Lower leg skin (tissue), 4 donors: ENCODE measurements at regions of chr1 and their contacts with region 1.

Region 1: DNA sequence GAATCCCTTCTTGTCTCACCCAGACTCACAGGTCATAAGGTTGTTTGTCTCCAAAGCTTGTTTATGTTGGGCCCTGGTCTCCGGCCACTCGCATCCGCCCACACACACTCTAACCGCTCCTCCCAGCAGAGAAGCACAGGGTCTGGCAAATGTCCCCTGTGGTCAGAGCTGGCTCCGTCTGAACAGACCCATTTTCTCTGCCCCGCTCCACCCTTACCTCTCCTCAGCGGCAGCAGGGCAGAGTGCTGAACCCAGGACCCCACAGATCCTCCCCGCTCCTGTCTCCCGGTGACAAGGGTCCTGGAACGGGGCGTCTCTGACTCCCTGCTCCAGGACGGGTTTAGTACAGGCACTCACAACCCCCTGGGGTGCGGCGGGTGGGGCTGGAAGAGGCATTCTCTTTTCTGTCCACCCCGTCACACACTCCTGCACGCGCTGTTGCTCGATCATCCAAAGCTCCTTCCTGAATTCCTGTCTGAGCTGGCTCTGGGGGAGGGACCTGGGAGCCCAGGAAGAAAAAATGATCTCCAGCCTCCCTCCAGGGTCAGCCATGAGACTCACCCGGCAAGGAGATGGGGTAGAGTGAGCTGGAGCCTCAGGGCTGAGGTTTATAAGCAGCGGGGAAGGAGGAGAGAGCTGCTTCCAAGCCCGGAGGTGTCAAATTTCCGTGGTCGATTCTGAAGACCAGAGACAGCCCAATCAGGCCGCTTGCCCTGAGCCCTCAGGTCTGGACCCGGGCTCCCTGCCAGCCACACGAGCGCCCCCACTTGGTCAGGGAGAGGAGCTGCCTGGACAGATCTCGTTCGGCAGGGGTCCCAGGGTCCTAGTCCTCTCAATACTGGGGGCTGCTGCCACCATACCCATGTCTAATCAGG is at the start of gene S100A13:
- DNase-seq: peak; percentile 77 to 95
- H3K4me3 ChIP-seq: peak within 1 kb of the TSS; percentile 39
- CTCF ChIP-seq: no peak
- POLR2A ChIP-seq: peak in 1 of 2 donors; percentile 31
- total RNA-seq, gene S100A13: 44.1 to 72.8 (median 47.2) TPM

Region 2: GRCh38 chr1:153532769-153533599 is 94.2 kb before region 1 on chr1:
- intact Hi-C with region 1: loop called (anchors 10 kb)
- DNase-seq: peak; percentile 89 to 98
- H3K4me3 ChIP-seq: no peak overlapping the region
- CTCF ChIP-seq: peak in 2 of 3 donors; percentile 57 to 80
- POLR2A ChIP-seq: no peak